ENCODE measurements at regions of chrX and their contacts with region 1.

Region 1: GRCh38 chrX:33434256-33435092 is 223.1 kb upstream of the DMD start:
- DNase-seq: peak; percentile 73
- H3K4me3 ChIP-seq: peak overlapping the region; percentile 29
- H3K27ac ChIP-seq: no peak overlapping the region
- H3K4me1 ChIP-seq: no peaks in the 10 kb centered on the region
- CTCF ChIP-seq: peak; percentile 76

Region 2: DNA sequence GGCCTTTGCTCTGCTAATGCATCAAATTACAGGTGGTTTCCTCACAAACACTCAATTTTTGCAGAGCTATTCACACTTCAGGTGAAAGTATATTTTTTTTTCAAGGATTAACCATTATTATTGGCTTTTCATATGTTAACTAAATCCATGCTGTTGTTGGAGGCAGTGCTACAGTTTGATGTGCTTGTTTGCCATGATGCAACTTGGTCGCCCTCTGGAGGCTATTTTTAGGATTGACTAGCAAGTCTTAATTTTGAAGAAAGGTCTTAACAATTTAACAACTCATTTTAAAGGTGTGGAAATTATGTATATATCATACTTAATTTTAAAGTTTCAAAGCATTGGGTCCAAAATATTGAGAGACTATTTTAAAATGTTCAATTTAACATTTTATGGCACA is 866.4 kb after region 1 on chrX:
- CTCF ChIA-PET with region 1: no interaction called
- POLR2A ChIA-PET with region 1: no interaction called
- intact Hi-C with region 1: loop called (anchors 2 kb)
- DNase-seq: peak; percentile 47
- H3K4me3 ChIP-seq: no peak overlapping the region
- H3K27ac ChIP-seq: no peak overlapping the region
- H3K4me1 ChIP-seq: no peaks in the 10 kb centered on the region
- CTCF ChIP-seq: peak; percentile 75